ENCODE measurements at regions of chr15 and their contacts with region 1.

Region 1: DNA sequence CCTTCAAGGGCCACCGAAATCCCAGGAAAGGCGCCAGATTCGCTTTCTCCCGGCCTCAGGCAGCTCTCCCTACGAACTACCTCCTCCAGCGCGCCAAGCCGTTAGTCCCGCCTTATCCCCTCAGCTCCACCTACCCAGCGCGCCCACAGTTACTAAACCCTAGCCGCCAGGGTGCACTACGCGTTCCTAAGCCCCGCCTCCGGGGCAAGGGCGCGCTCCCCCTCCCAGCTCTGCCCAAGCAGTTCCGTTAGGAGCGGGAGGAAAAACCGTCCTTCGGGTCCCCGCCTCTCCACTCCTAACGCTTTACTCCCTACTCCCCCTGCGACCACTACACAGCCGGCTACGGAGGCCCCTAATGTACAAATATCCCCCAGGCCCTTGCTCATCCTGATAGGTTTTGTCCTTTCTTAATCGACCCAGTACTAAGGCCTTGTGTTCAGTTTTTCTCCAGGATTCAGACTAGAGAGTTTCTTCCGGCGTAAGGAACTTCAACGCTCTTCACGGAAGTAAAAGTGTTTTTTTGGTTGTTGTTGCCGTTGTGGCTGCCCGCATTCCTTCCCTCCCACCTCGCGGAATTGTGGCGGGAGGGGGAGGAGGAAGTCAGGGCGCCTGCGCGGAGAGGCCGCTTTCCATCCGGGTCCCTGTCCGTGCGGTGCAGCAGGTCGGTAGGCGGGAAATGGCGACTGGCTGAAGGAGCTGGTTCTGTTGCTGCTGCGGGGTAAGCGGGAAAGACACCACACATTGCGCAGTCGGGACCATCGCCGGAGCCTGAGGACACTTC is at the start of gene CTDSPL2:
- DNase-seq: peak; percentile 87 to 96 (median 91)
- ATAC-seq: peak; percentile 95
- H3K4me3 ChIP-seq: peak within 1 kb of the TSS; percentile 72
- H3K4me3 Mint-ChIP-seq: peak within 1 kb of the TSS; percentile 99
- H3K27ac ChIP-seq: peak within 1 kb of the TSS; percentile 97 to 98
- H3K27ac Mint-ChIP-seq: peak within 1 kb of the TSS; percentile 99
- H3K4me1 ChIP-seq: peaks cover 24% of the 10 kb centered on the region
- H3K4me1 Mint-ChIP-seq: peaks cover 66% of the 10 kb centered on the region
- H3K27me3 ChIP-seq: no peaks in the 10 kb centered on the region
- H3K27me3 Mint-ChIP-seq: no peaks in the 10 kb centered on the region
- CTCF ChIP-seq: peak; percentile 24
- total RNA-seq, gene CTDSPL2: 106 to 113 TPM

Region 2: DNA sequence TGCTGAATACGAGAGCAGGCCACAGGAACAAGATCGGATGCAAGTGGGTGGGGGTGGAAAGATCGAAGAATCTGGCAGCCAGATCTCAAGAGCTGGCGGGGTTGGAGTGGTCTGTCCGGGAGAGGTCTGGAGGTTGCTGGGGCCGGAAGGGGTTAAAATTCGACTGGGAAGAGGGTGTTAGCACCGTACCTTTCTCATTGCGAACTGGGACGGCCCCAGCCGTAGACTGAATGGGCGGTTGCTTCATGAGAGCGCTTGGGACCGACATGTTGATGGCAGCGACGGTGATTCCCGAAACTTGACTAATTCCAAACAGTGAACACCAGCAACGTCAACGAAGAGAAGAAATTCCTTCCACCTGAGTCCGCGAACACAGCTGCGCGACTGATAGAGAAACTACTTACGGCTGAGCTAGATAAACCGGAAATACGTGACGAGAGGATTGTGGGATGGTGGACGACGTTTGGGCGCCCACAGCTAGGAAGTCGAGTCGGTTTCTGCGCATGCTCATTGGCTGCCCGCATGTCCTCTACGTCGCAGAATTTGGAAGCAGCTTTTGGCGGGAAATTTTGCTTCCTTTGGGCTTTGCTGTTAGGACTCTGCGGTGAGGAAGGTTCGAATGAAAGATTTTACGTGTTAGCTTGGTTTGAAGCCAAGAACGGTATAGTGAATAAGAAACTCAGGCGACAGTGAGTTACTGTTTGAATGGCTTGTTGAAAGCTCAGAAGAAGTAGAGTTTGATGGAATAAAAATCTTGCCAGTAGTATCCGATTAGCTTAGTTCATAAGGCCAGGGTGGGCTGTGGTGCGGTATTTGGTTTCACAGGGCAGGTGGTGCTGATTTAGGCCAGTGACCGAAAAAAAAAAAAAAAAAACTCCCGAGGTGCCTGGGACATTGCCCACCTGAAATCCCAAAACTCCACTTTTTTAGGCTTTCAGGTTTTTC is 602.6 kb before region 1 on chr15 and contains the start of gene MFAP1:
- CTCF ChIA-PET with region 1: no interaction called
- POLR2A ChIA-PET with region 1: interaction called, 5 read pairs
- intact Hi-C with region 1: loop called in 1 of 2 experiments (anchors 10 kb)
- DNase-seq: peak; percentile 79 to 99 (median 88)
- ATAC-seq: peak; percentile 93
- H3K4me3 ChIP-seq: peak within 1 kb of the TSS; percentile 86
- H3K4me3 Mint-ChIP-seq: peak within 1 kb of the TSS; percentile 99
- H3K27ac ChIP-seq: peak within 1 kb of the TSS; percentile 90 to 94
- H3K27ac Mint-ChIP-seq: peak within 1 kb of the TSS; percentile 97
- H3K4me1 ChIP-seq: peaks cover 65% of the 10 kb centered on the region
- H3K4me1 Mint-ChIP-seq: peaks cover 62% of the 10 kb centered on the region
- H3K27me3 ChIP-seq: no peaks in the 10 kb centered on the region
- H3K27me3 Mint-ChIP-seq: no peaks in the 10 kb centered on the region
- CTCF ChIP-seq: no peak
- total RNA-seq, gene MFAP1: 9.4 to 10.6 TPM

Region 3: DNA sequence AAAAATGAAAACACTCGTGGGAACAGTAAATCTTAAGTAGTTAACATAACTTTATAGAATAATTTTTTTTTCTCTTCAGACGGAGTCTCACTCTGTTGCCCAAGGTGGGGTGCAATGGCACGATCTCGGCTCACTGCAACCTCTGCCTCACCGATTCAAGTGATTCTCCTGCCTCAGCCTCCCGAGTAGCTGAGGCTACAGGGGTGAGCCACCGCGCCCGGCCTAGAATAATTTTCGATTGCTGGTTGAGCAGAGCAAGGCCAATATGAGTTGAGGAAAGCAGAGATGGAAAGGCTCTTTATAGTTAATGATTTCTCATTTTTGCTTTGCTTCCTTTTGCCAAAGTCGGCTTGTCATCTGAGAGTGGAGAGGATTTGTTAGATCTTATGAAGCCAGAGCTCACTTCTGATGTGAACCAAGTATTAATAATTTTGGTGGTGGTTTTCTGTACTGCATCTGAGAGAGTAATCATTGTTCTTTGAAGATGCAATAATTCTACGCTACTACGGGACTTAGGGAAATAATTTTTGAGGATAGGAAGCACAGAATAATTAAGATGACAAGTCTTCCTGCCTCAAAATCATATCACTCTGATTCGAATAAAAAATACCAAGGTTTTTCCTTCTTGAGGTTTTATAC is 140.2 kb before region 1 on chr15:
- CTCF ChIA-PET with region 1: interaction called, 4 read pairs
- POLR2A ChIA-PET with region 1: interaction called, 78 read pairs
- intact Hi-C with region 1: loop called (anchors 2 kb)
- DNase-seq: peak in 2 of 14 experiments; percentile 23 to 32
- ATAC-seq: no peak
- H3K4me3 ChIP-seq: peak overlapping the region; percentile 78
- H3K4me3 Mint-ChIP-seq: peak overlapping the region; percentile 98
- H3K27ac ChIP-seq: peak overlapping the region; percentile 95
- H3K27ac Mint-ChIP-seq: peak overlapping the region; percentile 99
- H3K4me1 ChIP-seq: peaks cover 16% of the 10 kb centered on the region
- H3K4me1 Mint-ChIP-seq: peaks cover 51% of the 10 kb centered on the region
- H3K27me3 ChIP-seq: no peaks in the 10 kb centered on the region
- H3K27me3 Mint-ChIP-seq: peaks cover 8% of the 10 kb centered on the region
- CTCF ChIP-seq: peak; percentile 27

Region 4: GRCh38 chr15:44366971-44367370 is 60.2 kb before region 1 on chr15:
- CTCF ChIA-PET with region 1: no interaction called
- POLR2A ChIA-PET with region 1: no interaction called
- intact Hi-C with region 1: no loop called
- DNase-seq: no peak
- ATAC-seq: no peak
- H3K4me3 ChIP-seq: no peak overlapping the region
- H3K4me3 Mint-ChIP-seq: no peak overlapping the region
- H3K27ac ChIP-seq: no peak overlapping the region
- H3K27ac Mint-ChIP-seq: no peak overlapping the region
- H3K4me1 ChIP-seq: no peaks in the 10 kb centered on the region
- H3K4me1 Mint-ChIP-seq: no peaks in the 10 kb centered on the region
- H3K27me3 ChIP-seq: no peaks in the 10 kb centered on the region
- H3K27me3 Mint-ChIP-seq: no peaks in the 10 kb centered on the region
- CTCF ChIP-seq: no peak

Region 5: GRCh38 chr15:44468713-44469385 is 41.7 kb after region 1 on chr15:
- CTCF ChIA-PET with region 1: interaction called, 3 read pairs
- POLR2A ChIA-PET with region 1: no interaction called
- intact Hi-C with region 1: loop called in 1 of 2 experiments (anchors 5 kb)
- DNase-seq: peak in 2 of 14 experiments; percentile 13 to 18
- ATAC-seq: no peak
- H3K4me3 ChIP-seq: no peak overlapping the region
- H3K4me3 Mint-ChIP-seq: no peak overlapping the region
- H3K27ac ChIP-seq: no peak overlapping the region
- H3K27ac Mint-ChIP-seq: no peak overlapping the region
- H3K4me1 ChIP-seq: no peaks in the 10 kb centered on the region
- H3K4me1 Mint-ChIP-seq: peaks cover 30% of the 10 kb centered on the region
- H3K27me3 ChIP-seq: no peaks in the 10 kb centered on the region
- H3K27me3 Mint-ChIP-seq: no peaks in the 10 kb centered on the region
- CTCF ChIP-seq: no peak

Region 6: DNA sequence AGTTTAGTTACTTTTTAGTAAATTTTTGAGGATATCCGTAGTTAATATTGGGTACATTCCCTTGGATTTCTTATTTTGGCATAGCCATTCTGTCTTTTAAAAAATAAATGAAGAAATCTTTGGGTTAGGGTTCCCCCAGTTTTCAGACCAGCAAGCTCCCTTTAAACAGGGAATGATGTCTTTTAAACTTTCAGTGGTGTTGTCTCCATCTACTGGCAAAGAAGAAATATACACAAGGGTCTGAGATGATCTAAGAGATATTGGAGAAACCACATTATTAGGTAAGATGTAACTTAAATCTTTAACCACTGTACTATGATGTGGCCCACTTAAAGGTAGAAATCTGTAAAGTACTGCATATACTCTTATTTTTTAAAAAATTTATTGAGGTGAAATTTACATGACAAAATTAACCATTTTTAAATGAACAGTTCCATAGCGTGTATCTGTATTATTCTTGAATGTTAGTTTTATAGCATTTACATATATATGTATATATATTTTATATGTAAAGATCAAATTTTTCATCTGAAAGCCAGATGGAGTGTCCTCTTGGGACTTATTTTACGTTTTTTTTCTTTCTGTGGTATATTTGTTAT is 74.7 kb after region 1 on chr15:
- CTCF ChIA-PET with region 1: interaction called, 16 read pairs
- POLR2A ChIA-PET with region 1: interaction called, 4 read pairs
- intact Hi-C with region 1: loop called in 1 of 2 experiments (anchors 10 kb)
- DNase-seq: peak in 3 of 14 experiments; percentile 49 to 54 (median 50)
- ATAC-seq: peak; percentile 67
- H3K4me3 ChIP-seq: no peak overlapping the region
- H3K4me3 Mint-ChIP-seq: no peak overlapping the region
- H3K27ac ChIP-seq: no peak overlapping the region
- H3K27ac Mint-ChIP-seq: peak overlapping the region; percentile 64
- H3K4me1 ChIP-seq: no peaks in the 10 kb centered on the region
- H3K4me1 Mint-ChIP-seq: peaks cover 20% of the 10 kb centered on the region
- H3K27me3 ChIP-seq: no peaks in the 10 kb centered on the region
- H3K27me3 Mint-ChIP-seq: no peaks in the 10 kb centered on the region
- CTCF ChIP-seq: peak; percentile 80